ENCODE measurements at regions of chr2 and their contacts with region 1.

Region 1: GRCh38 chr2:188551671-188552070 is 260.0 kb downstream of the GULP1 start:
- DNase-seq: no peak
- ATAC-seq: no peak
- H3K4me3 Mint-ChIP-seq: no peak overlapping the region
- H3K27ac Mint-ChIP-seq: no peak overlapping the region
- H3K4me1 Mint-ChIP-seq: no peaks in the 10 kb centered on the region
- H3K27me3 Mint-ChIP-seq: no peaks in the 10 kb centered on the region
- CTCF ChIP-seq: no peak

Region 2: GRCh38 chr2:188495990-188496431 is 55.7 kb before region 1 on chr2:
- CTCF ChIA-PET with region 1: no interaction called
- POLR2A ChIA-PET with region 1: no interaction called
- intact Hi-C with region 1: no loop called
- DNase-seq: no peak
- ATAC-seq: no peak
- H3K4me3 Mint-ChIP-seq: no peak overlapping the region
- H3K27ac Mint-ChIP-seq: no peak overlapping the region
- H3K4me1 Mint-ChIP-seq: no peaks in the 10 kb centered on the region
- H3K27me3 Mint-ChIP-seq: no peaks in the 10 kb centered on the region
- CTCF ChIP-seq: no peak

Region 3: DNA sequence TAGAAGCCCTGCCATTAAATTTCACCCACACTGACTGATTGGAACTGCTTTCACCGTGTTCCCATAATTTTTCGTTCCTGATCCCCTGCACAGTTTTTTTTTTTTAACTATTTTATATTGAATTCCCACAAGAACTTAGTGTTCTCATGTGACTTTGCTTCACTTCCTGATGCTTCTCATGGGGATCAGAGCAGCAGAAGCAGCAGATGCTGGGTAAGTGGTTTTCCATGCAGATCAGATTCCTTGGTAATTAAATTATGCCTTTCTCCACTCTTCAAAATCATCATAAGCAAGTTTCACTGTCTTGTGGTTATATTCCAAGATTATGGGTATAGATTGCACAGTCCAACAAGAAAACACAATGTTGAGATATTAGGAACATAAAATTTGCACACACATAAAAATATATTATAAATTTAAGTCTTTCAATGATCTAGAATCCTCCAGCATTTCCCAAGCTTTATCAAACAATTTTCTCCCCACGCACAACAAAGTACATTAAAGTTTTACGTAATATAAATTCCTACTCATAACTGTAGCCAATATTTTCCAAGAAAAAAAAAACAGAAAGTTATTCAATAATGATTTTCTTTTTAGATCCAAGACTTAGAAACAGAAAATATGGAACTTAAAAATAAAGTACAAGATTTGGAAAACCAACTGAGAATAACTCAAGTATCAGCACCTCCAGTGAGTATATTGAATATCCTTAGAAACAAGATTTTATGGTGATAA is 17.9 kb after region 1 on chr2:
- CTCF ChIA-PET with region 1: no interaction called
- POLR2A ChIA-PET with region 1: no interaction called
- intact Hi-C with region 1: loop called (anchors 2 kb)
- DNase-seq: no peak
- ATAC-seq: no peak
- H3K4me3 Mint-ChIP-seq: no peak overlapping the region
- H3K27ac Mint-ChIP-seq: no peak overlapping the region
- H3K4me1 Mint-ChIP-seq: no peaks in the 10 kb centered on the region
- H3K27me3 Mint-ChIP-seq: no peaks in the 10 kb centered on the region
- CTCF ChIP-seq: no peak

Region 4: DNA sequence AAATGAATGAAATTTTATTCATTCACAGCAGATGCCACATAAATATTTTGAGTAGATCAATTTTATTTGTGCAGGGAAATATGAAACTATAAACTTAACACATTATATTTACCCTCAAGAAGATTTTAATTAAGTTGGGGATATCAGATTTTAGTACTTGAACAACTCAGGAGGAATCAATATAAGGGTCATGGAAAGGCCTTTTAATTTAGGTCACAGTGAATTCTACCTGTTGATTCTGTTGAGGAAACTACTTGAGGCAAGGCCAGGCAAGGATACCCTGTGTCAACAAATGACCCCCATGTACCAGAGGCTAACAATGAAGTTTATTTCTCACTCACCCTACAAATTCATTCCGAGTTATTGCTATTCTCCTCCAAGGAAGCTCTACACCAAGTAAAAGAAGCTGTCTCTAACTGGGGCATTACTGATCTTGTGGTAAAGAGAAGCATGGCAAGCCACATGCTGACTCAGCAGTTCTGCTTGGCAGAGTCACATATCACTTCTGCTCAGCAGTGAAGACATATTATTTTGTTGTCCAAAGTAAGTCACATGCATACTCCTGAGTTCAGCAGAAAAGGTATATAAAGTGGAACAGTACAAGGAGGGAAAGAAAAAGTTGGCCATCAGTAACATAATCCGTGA is 55.7 kb after region 1 on chr2:
- CTCF ChIA-PET with region 1: no interaction called
- POLR2A ChIA-PET with region 1: no interaction called
- intact Hi-C with region 1: no loop called
- DNase-seq: no peak
- ATAC-seq: no peak
- H3K4me3 Mint-ChIP-seq: no peak overlapping the region
- H3K27ac Mint-ChIP-seq: no peak overlapping the region
- H3K4me1 Mint-ChIP-seq: no peaks in the 10 kb centered on the region
- H3K27me3 Mint-ChIP-seq: no peaks in the 10 kb centered on the region
- CTCF ChIP-seq: no peak

Measured in activated B cell treated with CpG ODN at 0.5 μM for 24 hours (primary cell).